Gastrocnemius medialis (tissue), 4 donors: ENCODE measurements at regions of chr1 and their contacts with region 1.

Region 1: DNA sequence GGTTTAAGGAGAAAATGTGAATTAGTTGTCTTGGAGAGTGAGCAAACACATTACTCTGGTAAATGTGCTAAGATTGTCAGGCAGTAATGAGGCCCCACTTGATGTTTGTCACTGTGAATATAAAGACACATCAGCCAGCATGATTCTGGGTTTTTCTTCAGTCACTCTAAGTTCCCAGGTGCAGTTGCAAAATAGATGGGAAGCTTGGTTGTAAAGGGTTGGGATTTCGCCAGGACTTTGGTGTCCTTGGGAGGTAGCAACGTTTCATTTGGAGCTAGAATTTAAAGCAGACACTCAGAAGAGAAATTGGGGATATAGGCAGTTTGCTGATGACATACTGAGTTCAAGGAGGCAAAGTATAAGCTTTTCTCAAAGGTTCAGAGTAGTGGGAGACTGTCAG is 154.3 kb downstream of the MAST2 start:
- DNase-seq: peak; percentile 52 to 67
- ATAC-seq: peak; percentile 55 to 61
- H3K4me3 ChIP-seq: no peak overlapping the region
- H3K27ac ChIP-seq: peak overlapping the region; percentile 86 to 94 (median 92)
- H3K4me1 ChIP-seq: peaks cover 70 to 85% of the 10 kb centered on the region in 2 donors
- H3K27me3 ChIP-seq: no peaks in the 10 kb centered on the region
- CTCF ChIP-seq: no peak
- POLR2A ChIP-seq: no peak

Region 2: GRCh38 chr1:45913183-45913683 is 44.5 kb before region 1 on chr1:
- in situ Hi-C with region 1: no loop called
- intact Hi-C with region 1: loop called (anchors 5 kb)
- DNase-seq: peak; percentile 88 to 93
- ATAC-seq: peak; percentile 90 to 93
- H3K4me3 ChIP-seq: peak overlapping the region; percentile 55 to 64 (median 58)
- H3K27ac ChIP-seq: peak overlapping the region; percentile 91 to 97 (median 92)
- H3K4me1 ChIP-seq: peaks cover 36 to 39% of the 10 kb centered on the region in 2 donors
- H3K27me3 ChIP-seq: no peaks in the 10 kb centered on the region
- CTCF ChIP-seq: no peak
- POLR2A ChIP-seq: peak; percentile 84 to 89

Region 3: DNA sequence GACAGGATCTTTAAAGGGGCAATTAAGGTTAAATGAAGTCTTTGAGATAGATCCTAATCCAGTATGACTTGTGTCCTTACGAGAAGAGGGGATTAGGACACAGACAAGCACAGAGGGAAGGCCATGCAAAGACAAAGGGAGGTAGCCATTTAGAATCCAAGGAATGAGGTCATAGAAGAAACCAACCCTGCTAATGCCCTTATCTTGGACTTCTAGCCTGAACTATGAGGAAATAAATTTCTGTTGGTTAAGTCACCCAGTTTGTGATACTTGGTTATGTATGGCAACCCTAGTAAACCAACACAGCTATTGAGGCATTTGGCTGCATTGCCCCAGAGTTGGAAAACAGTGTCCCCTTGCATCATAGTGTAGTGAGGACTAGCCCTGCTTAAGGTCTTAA is 32.9 kb before region 1 on chr1:
- in situ Hi-C with region 1: no loop called
- intact Hi-C with region 1: loop called (anchors 2 kb)
- DNase-seq: peak in 1 of 2 donors; percentile 78
- ATAC-seq: peak; percentile 79 to 89
- H3K4me3 ChIP-seq: no peak overlapping the region
- H3K27ac ChIP-seq: peak overlapping the region; percentile 91 to 97 (median 92)
- H3K4me1 ChIP-seq: peaks cover 74 to 85% of the 10 kb centered on the region in 2 donors
- H3K27me3 ChIP-seq: no peaks in the 10 kb centered on the region
- CTCF ChIP-seq: no peak
- POLR2A ChIP-seq: no peak